ENCODE measurements at regions of chr3 and their contacts with region 1.

Region 1: DNA sequence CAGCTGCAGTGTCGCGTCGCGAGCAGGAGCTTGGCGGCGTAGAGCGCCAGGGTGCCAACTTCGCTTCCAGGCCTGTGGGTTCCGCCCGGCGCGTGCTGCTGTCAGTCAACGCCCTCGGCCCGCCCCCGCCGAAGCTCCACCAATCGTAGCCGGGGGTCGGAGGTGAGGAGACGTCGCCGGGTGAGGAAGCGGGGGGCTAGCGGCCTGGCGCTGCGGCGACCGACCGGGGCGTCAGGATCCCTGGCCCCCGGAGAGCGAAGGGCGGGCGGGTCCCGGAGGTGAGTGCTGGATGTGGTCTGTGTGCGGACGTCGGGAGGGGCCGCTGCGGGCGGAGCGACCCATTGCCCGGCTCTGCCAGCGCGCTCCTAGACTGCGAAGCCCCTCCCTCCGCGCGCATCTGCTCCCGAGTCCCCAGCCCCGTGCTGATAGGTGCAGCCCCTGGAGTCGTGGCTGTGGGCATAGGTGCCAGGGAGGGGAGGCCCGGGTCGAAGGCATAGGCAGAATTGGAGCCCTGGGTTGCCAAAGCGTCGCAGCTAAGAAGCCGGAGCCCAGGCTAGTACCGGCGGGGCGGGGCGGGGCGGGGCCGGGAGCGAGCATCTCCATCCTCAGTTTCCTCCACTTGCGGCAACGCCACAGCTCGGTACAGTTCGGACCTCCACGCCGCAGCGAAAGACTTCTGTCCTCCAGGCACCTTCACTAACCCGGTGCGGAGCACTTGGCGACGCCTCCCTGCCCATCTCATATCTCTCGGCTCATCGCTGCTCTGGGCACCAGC is at the start of gene NXPE3:
- DNase-seq: peak; percentile 74 to 93
- H3K4me3 ChIP-seq: peak within 1 kb of the TSS; percentile 82
- H3K27ac ChIP-seq: no peak within 1 kb of the TSS
- H3K4me1 ChIP-seq: peaks cover 5% of the 10 kb centered on the region
- H3K27me3 ChIP-seq: no peaks in the 10 kb centered on the region
- CTCF ChIP-seq: 0 out of 2 replicates have a peak, but pooled peaks have one; percentile 6
- total RNA-seq, gene NXPE3: 12.0 and 12.8 TPM in 2 replicates

Region 2: DNA sequence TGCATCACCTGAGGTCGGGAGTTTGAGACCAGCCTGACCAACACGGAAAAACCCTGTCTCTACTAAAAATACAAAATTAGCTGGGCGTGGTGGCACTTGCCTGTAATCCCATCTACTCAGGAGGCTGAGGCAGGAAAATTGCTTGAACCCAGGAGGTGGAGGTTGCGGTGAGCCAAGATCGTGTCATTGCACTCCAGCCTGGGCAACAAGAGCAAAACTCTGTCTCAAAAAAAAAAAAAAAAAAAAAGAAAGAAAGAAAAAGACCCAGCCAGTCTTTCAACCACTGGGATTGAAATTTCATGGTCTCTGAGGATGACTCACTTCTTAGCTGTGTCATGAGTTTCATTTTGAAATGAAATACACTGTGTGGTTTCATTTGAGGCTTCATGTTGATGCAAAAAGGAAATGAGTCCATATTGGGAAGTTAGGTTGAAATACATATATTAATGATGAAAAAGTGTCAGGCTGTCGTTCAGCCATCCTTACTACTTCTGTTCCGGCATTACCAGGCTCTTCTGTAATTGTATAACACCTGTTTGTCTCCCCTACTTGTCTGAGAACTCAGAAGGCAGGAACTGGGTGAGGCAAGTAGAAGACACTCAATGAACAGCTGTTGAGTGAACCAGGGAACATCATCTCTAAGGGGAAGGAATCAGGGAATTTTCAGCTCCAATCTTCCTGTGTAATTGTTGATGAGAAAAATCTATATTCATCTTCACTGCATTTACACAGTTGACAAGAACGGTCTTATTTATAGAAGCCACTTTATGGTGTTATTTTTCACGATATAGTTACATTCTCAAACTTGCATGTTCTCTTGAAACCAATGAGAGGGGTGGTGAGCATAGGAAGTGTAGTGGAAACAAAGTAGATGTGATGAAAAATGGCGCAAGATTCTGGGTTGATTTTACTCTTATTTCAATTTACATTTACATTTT is 157.5 kb after region 1 on chr3:
- CTCF ChIA-PET with region 1: no interaction called
- POLR2A ChIA-PET with region 1: no interaction called
- intact Hi-C with region 1: no loop called
- DNase-seq: peak in 1 of 2 experiments; percentile 77
- H3K4me3 ChIP-seq: no peak overlapping the region
- H3K27ac ChIP-seq: peak overlapping the region; percentile 75
- H3K4me1 ChIP-seq: peaks cover 16% of the 10 kb centered on the region
- H3K27me3 ChIP-seq: no peaks in the 10 kb centered on the region
- CTCF ChIP-seq: no peak

Region 3: DNA sequence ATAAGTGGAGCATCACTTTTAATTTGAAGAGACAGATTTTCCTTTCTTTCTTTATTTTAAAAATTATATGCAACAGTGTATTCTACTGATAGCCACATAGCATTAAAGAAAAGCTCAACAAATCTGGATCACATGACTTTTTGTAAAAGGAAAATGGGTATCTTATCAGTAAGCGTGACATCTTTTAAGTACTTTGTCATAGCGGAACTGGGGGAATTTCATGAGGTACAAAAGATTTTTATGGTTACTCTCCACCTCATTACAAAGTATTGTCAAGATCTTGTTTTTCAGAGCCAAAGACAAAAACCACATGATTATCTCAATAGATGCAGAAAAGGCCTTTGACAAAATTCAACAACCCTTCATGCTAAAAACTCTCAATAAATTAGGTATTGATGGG is 435.9 kb after region 1 on chr3:
- CTCF ChIA-PET with region 1: no interaction called
- POLR2A ChIA-PET with region 1: interaction called, 11 read pairs
- intact Hi-C with region 1: no loop called
- DNase-seq: no peak
- H3K4me3 ChIP-seq: no peak overlapping the region
- H3K27ac ChIP-seq: no peak overlapping the region
- H3K4me1 ChIP-seq: no peaks in the 10 kb centered on the region
- H3K27me3 ChIP-seq: no peaks in the 10 kb centered on the region
- CTCF ChIP-seq: no peak